GM10248 (cell line): ENCODE measurements at regions of chr5 and their contacts with region 1.

Region 1: DNA sequence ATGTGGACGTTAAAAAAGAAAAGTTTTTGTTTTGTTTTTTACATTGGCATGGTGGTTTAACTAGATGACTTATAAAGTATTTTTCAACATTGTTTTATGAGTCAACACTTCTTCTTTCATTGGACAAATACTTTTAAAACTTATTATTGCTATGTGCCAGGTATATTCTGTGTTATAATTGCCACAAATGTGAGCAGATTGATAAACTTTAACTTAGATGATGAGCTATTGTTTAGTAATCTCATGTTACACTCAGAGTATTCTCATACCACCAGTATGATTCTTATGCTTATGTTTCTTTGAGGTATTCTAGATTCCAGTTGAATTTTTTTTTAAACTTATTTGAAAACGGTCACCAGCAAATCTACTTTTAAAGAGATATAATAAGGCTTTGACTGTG is 60.3 kb downstream of the RASA1 start:
- DNase-seq: no peak
- CTCF ChIP-seq: no peak

Region 2: GRCh38 chr5:87311405-87312279 is 16.4 kb before region 1 on chr5:
- CTCF ChIA-PET with region 1: interaction called, 10 read pairs
- POLR2A ChIA-PET with region 1: no interaction called
- DNase-seq: no peak
- CTCF ChIP-seq: no peak